Naive thymus-derived CD8-positive, alpha-beta T cell (primary cell): ENCODE measurements at regions of chr7 and their contacts with region 1.

Region 1: GRCh38 chr7:923108-924041 is 31.1 kb downstream of the ADAP1 start:
- DNase-seq: peak; percentile 68 to 95 (median 89)
- ATAC-seq: peak; percentile 86 to 92
- H3K4me3 Mint-ChIP-seq: peak overlapping the region; percentile 82 to 93 (median 87)
- H3K27ac Mint-ChIP-seq: peak overlapping the region; percentile 92 to 97 (median 94)
- H3K4me1 Mint-ChIP-seq: peaks cover 11 to 57% (median 43%) of the 10 kb centered on the region in 4 donors
- H3K27me3 Mint-ChIP-seq: no peaks in the 10 kb centered on the region

Region 2: GRCh38 chr7:876167-876967 is 47.0 kb before region 1 on chr7 and contains the start of gene GET4:
- POLR2A ChIA-PET with region 1: interaction called, 15 read pairs
- DNase-seq: peak; percentile 95 to 99 (median 98)
- ATAC-seq: peak; percentile 80 to 81
- H3K4me3 Mint-ChIP-seq: peak within 1 kb of the TSS; percentile 83 to 95 (median 89)
- H3K27ac Mint-ChIP-seq: peak within 1 kb of the TSS; percentile 71 to 97 (median 90)
- H3K4me1 Mint-ChIP-seq: peaks cover 7 to 44% (median 33%) of the 10 kb centered on the region in 4 donors
- H3K27me3 Mint-ChIP-seq: no peaks in the 10 kb centered on the region
- polyA plus RNA-seq, gene GET4: 23.0 to 34.6 (median 23.6) TPM

Region 3: GRCh38 chr7:909358-910329 is 13.7 kb before region 1 on chr7:
- POLR2A ChIA-PET with region 1: interaction called, 13 read pairs
- DNase-seq: peak in 5 of 10 donors; percentile 32 to 46 (median 35)
- ATAC-seq: peak; percentile 47 to 50
- H3K4me3 Mint-ChIP-seq: peak overlapping the region; percentile 54 to 84 (median 72)
- H3K27ac Mint-ChIP-seq: peak overlapping the region in 9 of 10 donors; percentile 40 to 80 (median 59)
- H3K4me1 Mint-ChIP-seq: peaks cover 2 to 15% (median 9%) of the 10 kb centered on the region in 4 donors
- H3K27me3 Mint-ChIP-seq: no peaks in the 10 kb centered on the region